K562 (cell line): ENCODE measurements at regions of chr21 and their contacts with region 1.

Region 1: GRCh38 chr21:29018540-29018939 is 609 bp downstream of the RWDD2B start:
- DNase-seq: peak in 2 of 4 experiments; percentile 29 to 56
- ATAC-seq: peak; percentile 72
- H3K4me3 ChIP-seq: peak overlapping the region; percentile 80
- H3K27ac ChIP-seq: peak overlapping the region; percentile 92
- H3K4me1 ChIP-seq: peaks cover 6 to 8% of the 10 kb centered on the region in 2 experiments; a peak in 2 of 5 replicates
- H3K27me3 ChIP-seq: no peaks in the 10 kb centered on the region
- CTCF ChIP-seq: no peak
- EP300 ChIP-seq: no peak
- POLR2A ChIP-seq: no peak
- RAD21 ChIP-seq: no peak

Region 2: GRCh38 chr21:29002442-29003144 is 15.9 kb before region 1 on chr21:
- CTCF ChIA-PET with region 1: no interaction called
- POLR2A ChIA-PET with region 1: interaction called, 18 read pairs
- in situ Hi-C with region 1: no loop called
- intact Hi-C with region 1: loop called (anchors 1 kb)
- DNase-seq: peak; percentile 96 to 99 (median 97)
- ATAC-seq: peak; percentile 99
- H3K4me3 ChIP-seq: peak overlapping the region; percentile 49
- H3K27ac ChIP-seq: peak overlapping the region; percentile 88
- H3K4me1 ChIP-seq: peaks cover 6 to 19% of the 10 kb centered on the region in 2 experiments; a peak in 4 of 5 replicates
- H3K27me3 ChIP-seq: no peaks in the 10 kb centered on the region
- CTCF ChIP-seq: no peak
- EP300 ChIP-seq: peak; percentile 43
- POLR2A ChIP-seq: peak; percentile 99
- RAD21 ChIP-seq: no peak

Region 3: GRCh38 chr21:29499734-29500343 is 481.3 kb after region 1 on chr21:
- CTCF ChIA-PET with region 1: no interaction called
- POLR2A ChIA-PET with region 1: no interaction called
- in situ Hi-C with region 1: no loop called
- intact Hi-C with region 1: no loop called
- DNase-seq: peak; percentile 24 to 69 (median 50)
- ATAC-seq: peak; percentile 91
- H3K4me3 ChIP-seq: no peak overlapping the region
- H3K27ac ChIP-seq: no peak overlapping the region
- H3K4me1 ChIP-seq: peaks cover 3 to 13% of the 10 kb centered on the region in 2 experiments; a peak in 2 of 5 replicates
- H3K27me3 ChIP-seq: no peaks in the 10 kb centered on the region
- CTCF ChIP-seq: peak; percentile 66 to 89 (median 84)
- EP300 ChIP-seq: no peak
- POLR2A ChIP-seq: no peak
- RAD21 ChIP-seq: peak; percentile 40 to 73